ENCODE measurements at regions of chr11 and their contacts with region 1.

Region 1: GRCh38 chr11:114501901-114502300 is 57.8 kb downstream of the NXPE1 start:
- DNase-seq: no peak
- ATAC-seq: no peak
- H3K4me3 ChIP-seq: no peak overlapping the region
- H3K27ac ChIP-seq: no peak overlapping the region
- H3K4me1 ChIP-seq: no peaks in the 10 kb centered on the region
- H3K27me3 ChIP-seq: no peaks in the 10 kb centered on the region
- CTCF ChIP-seq: no peak
- POLR2A ChIP-seq: no peak

Region 2: DNA sequence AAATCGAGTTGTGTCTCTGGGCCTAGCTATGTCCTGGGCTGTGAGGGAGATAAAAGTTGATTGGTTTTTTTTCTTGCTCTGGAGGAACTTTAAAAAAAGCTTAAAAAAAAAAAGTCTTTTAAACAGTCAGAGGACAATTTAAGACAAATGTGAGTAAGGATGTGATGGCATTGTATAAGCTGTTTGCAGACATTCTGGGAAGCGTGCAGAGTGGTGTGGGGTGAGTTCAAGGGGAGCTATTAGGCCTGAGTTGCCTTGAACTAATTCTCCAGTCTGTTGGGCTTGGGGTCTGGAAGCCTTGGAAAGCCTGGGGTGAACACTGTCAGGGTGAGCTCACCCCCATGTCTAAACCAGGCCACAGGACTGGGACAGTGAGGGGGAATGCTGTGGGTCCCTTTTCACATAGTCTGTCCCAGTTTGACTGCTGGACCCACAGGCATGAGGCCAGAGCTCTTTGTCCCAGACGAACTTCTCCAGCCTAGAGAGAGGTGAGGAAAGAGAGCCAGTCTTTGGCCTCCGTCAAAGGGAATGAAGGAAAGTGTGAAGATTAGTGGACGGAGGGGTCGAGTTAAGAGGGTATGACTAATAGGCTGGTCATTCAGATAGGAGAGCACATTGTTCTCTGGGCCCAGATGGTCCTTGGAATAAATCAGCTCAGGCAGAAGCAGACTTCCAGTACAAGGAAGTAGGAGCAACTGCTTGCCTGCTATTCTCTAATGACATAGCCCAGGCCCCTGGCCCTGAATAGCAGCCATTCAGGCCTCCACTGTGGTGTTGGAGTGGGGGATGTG is 282.1 kb before region 1 on chr11:
- intact Hi-C with region 1: no loop called
- DNase-seq: peak in 1 of 5 donors; percentile 86
- ATAC-seq: peak; percentile 20 to 84 (median 56)
- H3K4me3 ChIP-seq: no peak overlapping the region
- H3K27ac ChIP-seq: peak overlapping the region in 10 of 12 donors; percentile 6 to 84 (median 63)
- H3K4me1 ChIP-seq: peaks cover 26 to 95% (median 58%) of the 10 kb centered on the region in 12 donors
- H3K27me3 ChIP-seq: no peaks in the 10 kb centered on the region
- CTCF ChIP-seq: no peak
- POLR2A ChIP-seq: peak in 1 of 2 donors; percentile 18

Region 3: DNA sequence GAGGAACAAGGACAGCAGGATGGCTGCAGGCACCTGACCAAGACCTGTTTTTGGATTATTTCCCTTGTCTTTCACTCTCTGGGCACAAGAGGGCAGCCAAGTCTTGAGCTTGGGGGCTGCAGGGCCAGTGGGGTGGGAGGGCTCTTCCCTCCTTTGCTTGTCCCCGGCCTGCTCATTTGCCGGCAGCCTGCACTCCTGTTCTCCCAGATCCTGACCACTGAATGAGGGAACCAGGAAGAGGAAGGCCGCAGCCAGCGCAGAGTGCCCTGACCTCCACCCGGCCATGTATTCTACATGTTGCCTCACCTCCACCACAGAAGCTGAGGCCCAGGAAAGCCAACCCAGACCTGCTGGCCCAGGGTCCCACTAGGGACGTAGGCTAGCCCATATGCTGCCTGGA is 221.2 kb before region 1 on chr11:
- intact Hi-C with region 1: no loop called
- DNase-seq: peak; percentile 55 to 69 (median 64)
- ATAC-seq: peak; percentile 48 to 92 (median 80)
- H3K4me3 ChIP-seq: no peak overlapping the region
- H3K27ac ChIP-seq: peak overlapping the region in 6 of 12 donors; percentile 30 to 67 (median 48)
- H3K4me1 ChIP-seq: peaks cover 0 to 27% (median 14%) of the 10 kb centered on the region in 12 donors
- H3K27me3 ChIP-seq: no peaks in the 10 kb centered on the region
- CTCF ChIP-seq: peak; percentile 41 to 81 (median 70)
- POLR2A ChIP-seq: peak in 1 of 2 donors; percentile 23

Region 4: GRCh38 chr11:114433376-114433775 is 68.5 kb before region 1 on chr11:
- intact Hi-C with region 1: no loop called
- DNase-seq: no peak
- ATAC-seq: no peak
- H3K4me3 ChIP-seq: no peak overlapping the region
- H3K27ac ChIP-seq: no peak overlapping the region
- H3K4me1 ChIP-seq: peaks cover 0 to under 1% (median 0%) of the 10 kb centered on the region in 12 donors
- H3K27me3 ChIP-seq: no peaks in the 10 kb centered on the region
- CTCF ChIP-seq: no peak
- POLR2A ChIP-seq: no peak

Region 5: DNA sequence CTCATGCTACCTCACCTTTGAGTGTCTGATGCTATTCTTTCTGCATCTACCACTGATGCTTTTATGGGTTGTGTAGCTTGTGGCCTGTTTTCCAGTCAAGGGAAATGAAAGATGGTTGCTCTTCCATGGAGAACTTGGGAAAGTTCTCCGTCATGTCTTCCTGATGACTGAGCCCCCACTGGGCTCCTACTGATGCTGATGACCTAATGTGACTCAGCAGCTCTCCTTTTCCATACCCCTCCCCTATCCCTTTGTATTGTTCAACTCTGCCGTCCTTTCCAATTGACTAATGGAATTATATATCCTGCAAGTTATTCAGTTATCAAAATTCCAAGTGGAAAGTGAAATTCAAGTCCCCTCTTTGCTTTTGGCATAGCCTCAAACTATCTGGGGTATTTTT is 18.0 kb before region 1 on chr11:
- intact Hi-C with region 1: no loop called
- DNase-seq: no peak
- ATAC-seq: no peak
- H3K4me3 ChIP-seq: no peak overlapping the region
- H3K27ac ChIP-seq: no peak overlapping the region
- H3K4me1 ChIP-seq: no peaks in the 10 kb centered on the region
- H3K27me3 ChIP-seq: no peaks in the 10 kb centered on the region
- CTCF ChIP-seq: no peak
- POLR2A ChIP-seq: no peak

Region 6: DNA sequence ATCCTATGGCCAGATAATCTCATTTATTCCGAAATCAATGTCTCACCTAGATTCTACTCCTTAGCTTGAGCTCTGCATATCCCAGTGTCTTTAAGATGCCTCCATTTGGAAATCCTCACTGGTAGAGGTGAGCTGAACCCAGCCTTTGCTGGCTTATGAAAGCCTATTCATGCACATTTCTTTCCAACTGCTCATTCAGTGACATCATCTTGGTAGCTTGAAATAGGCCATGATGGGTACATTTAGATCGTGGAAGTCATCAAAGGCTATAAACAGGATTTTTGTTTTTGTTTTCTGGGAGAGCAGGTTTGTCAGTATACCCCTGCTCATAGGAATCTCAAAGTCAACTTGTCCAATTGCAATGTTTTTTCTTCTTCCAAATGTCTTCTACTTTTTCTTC is 51.7 kb after region 1 on chr11:
- intact Hi-C with region 1: loop called in 1 of 10 experiments (anchors 5 kb)
- DNase-seq: no peak
- ATAC-seq: no peak
- H3K4me3 ChIP-seq: no peak overlapping the region
- H3K27ac ChIP-seq: no peak overlapping the region
- H3K4me1 ChIP-seq: no peaks in the 10 kb centered on the region
- H3K27me3 ChIP-seq: no peaks in the 10 kb centered on the region
- CTCF ChIP-seq: no peak
- POLR2A ChIP-seq: no peak

Measured in heart left ventricle (tissue), 16 donors.